ENCODE measurements at regions of chr6 and their contacts with region 1.

Region 1: DNA sequence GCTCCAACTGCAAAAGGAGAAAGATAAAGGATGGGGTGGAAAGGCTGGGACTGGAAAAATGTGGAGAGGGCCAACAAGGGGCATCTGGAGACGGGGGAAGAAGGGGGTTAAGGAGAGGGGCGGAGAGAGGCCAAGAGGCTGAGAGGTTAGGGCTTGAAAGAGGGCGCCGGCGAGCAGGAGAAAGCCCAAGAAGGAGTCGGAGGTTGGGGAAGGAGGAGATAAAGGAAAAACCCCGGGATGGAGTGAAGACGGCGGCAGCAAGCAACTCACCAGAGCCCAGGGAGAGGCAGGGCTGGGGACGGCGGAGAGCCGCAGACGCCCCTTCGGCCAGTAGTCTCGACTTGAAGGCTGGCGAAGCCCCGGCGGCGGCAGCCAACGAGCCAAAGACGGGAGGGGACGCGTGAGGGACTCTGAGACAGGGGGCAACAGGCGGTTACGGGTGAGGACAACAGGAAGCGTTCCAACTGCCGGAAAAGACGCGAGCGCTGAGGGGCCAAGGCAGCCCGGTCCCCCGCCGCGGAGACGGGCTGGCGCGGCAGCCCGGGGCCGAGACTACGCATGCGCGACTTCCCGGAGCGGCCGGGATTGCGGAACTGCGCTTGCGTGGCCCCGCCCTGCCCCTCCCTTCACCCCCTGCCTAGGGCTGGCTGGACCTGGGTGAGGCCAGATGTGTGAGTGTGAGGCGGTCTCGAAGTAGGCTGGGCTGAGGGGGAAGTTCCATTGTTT is at the start of gene STK38:
- DNase-seq: peak; percentile 85 to 87
- ATAC-seq: peak; percentile 92 to 97
- H3K4me3 ChIP-seq: peak within 1 kb of the TSS; percentile 76 to 97 (median 96)
- H3K27ac ChIP-seq: peak within 1 kb of the TSS; percentile 89 to 99 (median 98)
- H3K4me1 ChIP-seq: peaks cover 27 to 28% of the 10 kb centered on the region in 2 donors
- H3K27me3 ChIP-seq: no peaks in the 10 kb centered on the region
- CTCF ChIP-seq: peak in 2 of 5 experiments; percentile 4 to 21
- POLR2A ChIP-seq: peak; percentile 98
- total RNA-seq, gene STK38: 10.8 to 14.8 (median 12.7) TPM

Region 2: GRCh38 chr6:36423101-36423824 is 123.8 kb before region 1 on chr6:
- in situ Hi-C with region 1: no loop called
- intact Hi-C with region 1: loop called (anchors 2 kb)
- DNase-seq: peak; percentile 92 to 97
- ATAC-seq: peak; percentile 96 to 98
- H3K4me3 ChIP-seq: peak overlapping the region; percentile 55 to 66 (median 59)
- H3K27ac ChIP-seq: peak overlapping the region; percentile 78 to 82 (median 80)
- H3K4me1 ChIP-seq: peaks cover 6 to 7% of the 10 kb centered on the region in 2 donors
- H3K27me3 ChIP-seq: no peaks in the 10 kb centered on the region
- CTCF ChIP-seq: peak; percentile 26 to 67 (median 61)
- POLR2A ChIP-seq: peak; percentile 63 to 70

Region 3: DNA sequence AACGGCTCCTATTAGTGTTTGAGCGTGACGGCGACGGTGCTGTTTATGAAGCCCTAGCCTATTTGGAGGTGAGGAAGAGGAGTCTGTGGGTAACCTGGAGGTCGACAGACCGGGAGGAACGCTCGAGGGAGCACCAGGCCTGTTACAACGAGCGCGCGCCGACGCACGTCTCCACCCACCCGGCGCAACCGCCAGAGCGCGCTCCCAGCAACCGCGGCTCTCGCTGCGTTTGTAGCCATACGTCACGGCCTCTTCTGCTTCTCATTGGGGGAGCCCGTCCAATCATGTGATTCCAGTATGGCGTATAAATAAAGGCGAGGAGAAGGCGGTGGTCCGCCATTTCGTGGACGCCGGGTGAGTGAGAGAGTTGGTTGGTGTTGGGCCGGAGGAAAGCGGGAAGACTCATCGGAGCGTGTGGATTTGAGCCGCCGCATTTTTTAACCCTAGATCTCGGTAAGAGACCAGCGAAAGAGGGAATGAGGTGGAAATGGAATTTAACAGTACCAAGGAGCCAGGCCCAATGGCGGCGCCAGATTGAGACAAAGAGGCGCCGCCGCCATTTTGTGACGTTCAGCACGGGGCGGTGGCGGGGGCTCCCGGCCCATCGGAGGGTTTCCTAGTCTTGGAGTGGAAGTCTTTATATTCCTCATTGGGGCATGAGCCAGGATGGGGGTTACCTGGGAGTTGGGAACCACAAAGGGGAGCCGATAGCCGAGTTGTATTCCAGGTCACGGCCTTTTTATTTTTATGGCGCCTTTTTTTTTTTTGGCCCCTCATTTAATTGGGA is 47.1 kb after region 1 on chr6 and contains the start of gene SRSF3:
- in situ Hi-C with region 1: no loop called
- intact Hi-C with region 1: loop called (anchors 1 kb)
- DNase-seq: peak; percentile 96 to 97
- ATAC-seq: peak; percentile 93 to 95
- H3K4me3 ChIP-seq: peak within 1 kb of the TSS; percentile 69 to 94 (median 78)
- H3K27ac ChIP-seq: peak within 1 kb of the TSS; percentile 93 to 99 (median 97)
- H3K4me1 ChIP-seq: peaks cover 28 to 36% of the 10 kb centered on the region in 2 donors
- H3K27me3 ChIP-seq: no peaks in the 10 kb centered on the region
- CTCF ChIP-seq: peak; percentile 30 to 70 (median 66)
- POLR2A ChIP-seq: peak; percentile 100
- total RNA-seq, gene SRSF3: 66.3 to 118 (median 83.2) TPM

Region 4: DNA sequence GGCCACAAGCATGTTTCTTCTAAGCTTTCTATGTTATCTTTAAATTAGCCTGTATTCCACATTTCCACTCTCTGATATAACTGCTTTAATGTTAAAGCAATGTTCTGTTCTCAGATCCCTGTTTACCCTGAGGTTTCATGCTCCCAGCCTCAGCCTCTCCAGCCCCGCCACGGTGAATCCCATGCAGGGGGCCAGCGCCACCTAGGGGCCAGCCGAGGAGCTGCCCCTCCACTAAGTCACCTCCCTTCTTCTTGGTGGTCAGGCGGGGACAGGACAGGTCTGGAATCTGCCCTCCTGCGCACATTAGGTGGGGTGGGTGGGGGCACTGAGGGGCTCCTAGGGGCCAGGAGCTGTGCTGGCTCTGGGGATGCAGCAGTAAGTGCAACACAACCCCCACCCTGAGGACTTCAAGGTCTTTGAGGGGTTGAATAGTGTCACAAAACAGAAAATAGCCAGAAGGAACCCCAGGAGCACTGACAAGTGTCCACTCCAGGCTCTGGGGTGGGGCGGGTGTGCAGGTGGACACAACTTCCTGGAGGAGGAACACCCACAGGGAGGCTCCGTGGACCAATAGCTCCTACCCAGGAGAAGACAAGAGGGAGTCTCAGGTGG is 212.2 kb after region 1 on chr6:
- in situ Hi-C with region 1: no loop called
- intact Hi-C with region 1: loop called (anchors 1 kb)
- DNase-seq: peak; percentile 68 to 73
- ATAC-seq: peak; percentile 89 to 92
- H3K4me3 ChIP-seq: no peak overlapping the region
- H3K27ac ChIP-seq: no peak overlapping the region
- H3K4me1 ChIP-seq: peaks cover 0 to 3% of the 10 kb centered on the region in 2 donors
- H3K27me3 ChIP-seq: no peaks in the 10 kb centered on the region
- CTCF ChIP-seq: peak; percentile 91 to 100 (median 95)
- POLR2A ChIP-seq: no peak